ENCODE measurements at regions of chr12 and their contacts with region 1.

Region 1: GRCh38 chr12:7933255-7933729 is 2.7 kb downstream of the SLC2A3 start:
- DNase-seq: peak; percentile 66
- ATAC-seq: peak; percentile 92
- H3K4me3 Mint-ChIP-seq: no peak overlapping the region
- H3K27ac Mint-ChIP-seq: no peak overlapping the region
- H3K4me1 Mint-ChIP-seq: peaks cover 36% of the 10 kb centered on the region
- H3K27me3 Mint-ChIP-seq: no peaks in the 10 kb centered on the region
- CTCF ChIP-seq: peak; percentile 48; the same call in 1 of the 2 replicates

Region 2: GRCh38 chr12:7748852-7749251 is 184.4 kb before region 1 on chr12:
- CTCF ChIA-PET with region 1: no interaction called
- POLR2A ChIA-PET with region 1: no interaction called
- DNase-seq: no peak
- ATAC-seq: no peak
- H3K4me3 Mint-ChIP-seq: no peak overlapping the region
- H3K27ac Mint-ChIP-seq: peak overlapping the region; percentile 84; the same call in 1 of the 2 replicates
- H3K4me1 Mint-ChIP-seq: peaks cover 14% of the 10 kb centered on the region
- H3K27me3 Mint-ChIP-seq: no peaks in the 10 kb centered on the region
- CTCF ChIP-seq: no peak

Region 3: DNA sequence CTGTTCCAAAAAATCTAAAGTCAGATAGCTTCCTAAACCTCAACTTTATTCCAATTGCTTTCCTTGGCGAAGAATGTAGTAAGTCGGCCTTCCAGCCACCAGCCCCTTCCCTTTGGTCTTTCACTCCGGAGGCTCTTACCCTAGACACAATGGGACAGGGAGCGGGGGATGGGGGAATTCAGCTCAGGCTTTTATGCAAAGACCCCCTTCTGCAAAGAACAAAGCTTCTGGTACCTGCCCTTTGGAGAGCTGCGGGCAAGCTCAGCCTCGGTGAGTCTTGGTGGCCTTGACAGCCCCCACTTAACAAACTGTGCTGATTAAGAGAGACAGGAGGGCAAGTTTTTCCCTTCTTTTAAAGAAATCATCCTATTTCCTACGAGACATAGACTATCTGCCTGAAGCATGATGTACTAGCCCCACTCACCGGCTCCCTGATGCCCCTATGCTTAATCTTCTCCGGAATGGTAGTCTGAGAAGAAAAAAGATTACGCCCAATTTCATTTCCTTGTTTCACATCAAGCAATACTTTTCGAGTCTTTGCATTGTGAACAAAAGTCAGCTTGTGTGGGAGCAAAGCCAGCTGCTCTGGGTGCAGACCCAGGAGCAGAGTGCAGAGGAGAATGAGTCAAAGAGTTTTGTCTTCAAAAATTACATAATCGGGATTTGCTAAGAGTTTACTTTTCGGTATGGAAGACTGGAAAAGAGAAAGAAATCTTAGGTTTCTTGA is 145.6 kb before region 1 on chr12:
- CTCF ChIA-PET with region 1: no interaction called
- POLR2A ChIA-PET with region 1: no interaction called
- DNase-seq: peak; percentile 72
- ATAC-seq: peak; percentile 87
- H3K4me3 Mint-ChIP-seq: peak overlapping the region; percentile 91
- H3K27ac Mint-ChIP-seq: peak overlapping the region; percentile 98
- H3K4me1 Mint-ChIP-seq: peaks cover 61% of the 10 kb centered on the region
- H3K27me3 Mint-ChIP-seq: no peaks in the 10 kb centered on the region
- CTCF ChIP-seq: no peak

Region 4: DNA sequence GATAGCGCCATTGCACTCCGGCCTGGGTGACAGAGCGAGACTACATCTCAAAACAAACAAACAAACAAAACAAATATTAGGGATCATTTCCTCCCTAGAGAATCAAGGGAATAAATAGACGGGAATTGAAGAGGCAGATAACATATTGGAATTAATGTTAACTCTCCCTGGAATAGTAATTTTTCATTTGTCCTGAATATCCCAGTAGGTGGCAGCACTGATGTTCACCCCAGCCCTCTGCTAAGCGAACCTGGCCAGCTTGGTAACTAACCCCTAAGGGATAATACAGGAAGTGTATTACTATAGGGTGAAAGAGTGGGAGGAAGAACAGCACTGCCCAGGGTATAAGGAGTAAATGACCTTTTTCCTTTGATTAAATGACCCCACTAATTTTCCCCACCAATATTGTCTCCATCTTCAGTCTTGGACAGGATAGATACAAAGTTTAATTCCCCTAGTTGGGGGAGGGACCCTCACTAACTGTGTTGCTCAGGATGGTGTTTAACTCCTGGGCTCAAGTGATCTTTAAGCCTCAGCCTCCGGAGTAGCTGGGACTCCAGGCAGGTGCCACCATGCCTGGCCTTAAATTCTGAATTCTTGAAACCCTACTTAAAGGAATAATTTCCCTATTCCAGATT is 101.1 kb before region 1 on chr12:
- CTCF ChIA-PET with region 1: interaction called, 12 read pairs
- POLR2A ChIA-PET with region 1: interaction called, 3 read pairs
- DNase-seq: peak; percentile 34
- ATAC-seq: peak; percentile 98
- H3K4me3 Mint-ChIP-seq: no peak overlapping the region
- H3K27ac Mint-ChIP-seq: peak overlapping the region; percentile 72
- H3K4me1 Mint-ChIP-seq: peaks cover 30% of the 10 kb centered on the region
- H3K27me3 Mint-ChIP-seq: no peaks in the 10 kb centered on the region
- CTCF ChIP-seq: no peak; the same call in 1 of the 2 replicates

Region 5: GRCh38 chr12:7907009-7907408 is 26.3 kb before region 1 on chr12:
- CTCF ChIA-PET with region 1: interaction called, 13 read pairs
- POLR2A ChIA-PET with region 1: interaction called, 13 read pairs
- DNase-seq: peak; percentile 72
- ATAC-seq: peak; percentile 31
- H3K4me3 Mint-ChIP-seq: peak overlapping the region; percentile 30
- H3K27ac Mint-ChIP-seq: peak overlapping the region; percentile 100
- H3K4me1 Mint-ChIP-seq: peaks cover 47% of the 10 kb centered on the region
- H3K27me3 Mint-ChIP-seq: no peaks in the 10 kb centered on the region
- CTCF ChIP-seq: no peak

Region 6: GRCh38 chr12:7959701-7960121 is 26.4 kb after region 1 on chr12:
- CTCF ChIA-PET with region 1: interaction called, 205 read pairs
- POLR2A ChIA-PET with region 1: interaction called, 89 read pairs
- DNase-seq: peak; percentile 70
- ATAC-seq: peak; percentile 86
- H3K4me3 Mint-ChIP-seq: peak overlapping the region; percentile 75
- H3K27ac Mint-ChIP-seq: peak overlapping the region; percentile 97
- H3K4me1 Mint-ChIP-seq: peaks cover 48% of the 10 kb centered on the region
- H3K27me3 Mint-ChIP-seq: no peaks in the 10 kb centered on the region
- CTCF ChIP-seq: no peak

Region 7: DNA sequence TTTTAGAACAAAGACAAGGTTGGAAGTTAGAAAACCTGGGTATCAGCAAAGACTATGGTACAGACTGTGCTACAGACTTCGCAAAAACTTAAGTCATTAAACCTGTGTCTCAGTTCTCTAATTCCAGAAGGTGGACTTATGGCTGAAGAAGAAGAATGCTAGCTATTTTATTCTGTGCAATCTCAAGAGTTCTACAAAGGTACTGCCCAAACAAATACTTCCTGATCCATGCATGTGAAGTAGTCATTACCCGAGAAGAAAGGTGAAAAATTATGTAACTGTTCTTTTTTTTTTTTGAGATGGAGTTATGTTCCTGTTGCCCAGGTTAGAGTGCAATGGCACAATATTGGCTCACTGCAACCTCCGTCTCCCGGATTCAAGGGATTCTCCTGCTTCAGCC is 48.2 kb after region 1 on chr12:
- CTCF ChIA-PET with region 1: interaction called, 11 read pairs
- POLR2A ChIA-PET with region 1: interaction called, 3 read pairs
- DNase-seq: no peak
- ATAC-seq: no peak
- H3K4me3 Mint-ChIP-seq: no peak overlapping the region
- H3K27ac Mint-ChIP-seq: peak overlapping the region; percentile 74; the same call in 1 of the 2 replicates
- H3K4me1 Mint-ChIP-seq: peaks cover 35% of the 10 kb centered on the region
- H3K27me3 Mint-ChIP-seq: no peaks in the 10 kb centered on the region
- CTCF ChIP-seq: no peak

Region 8: GRCh38 chr12:8065991-8066594 is 132.8 kb after region 1 on chr12 and contains the start of gene C3AR1:
- CTCF ChIA-PET with region 1: no interaction called
- POLR2A ChIA-PET with region 1: no interaction called
- DNase-seq: no peak
- ATAC-seq: no peak
- H3K4me3 Mint-ChIP-seq: no peak within 1 kb of the TSS
- H3K27ac Mint-ChIP-seq: no peak within 1 kb of the TSS
- H3K4me1 Mint-ChIP-seq: no peaks in the 10 kb centered on the region
- H3K27me3 Mint-ChIP-seq: no peaks in the 10 kb centered on the region
- CTCF ChIP-seq: no peak
- total RNA-seq, gene C3AR1: 0.09 TPM in 2 of 3 replicates, not detected in the other

Region 9: DNA sequence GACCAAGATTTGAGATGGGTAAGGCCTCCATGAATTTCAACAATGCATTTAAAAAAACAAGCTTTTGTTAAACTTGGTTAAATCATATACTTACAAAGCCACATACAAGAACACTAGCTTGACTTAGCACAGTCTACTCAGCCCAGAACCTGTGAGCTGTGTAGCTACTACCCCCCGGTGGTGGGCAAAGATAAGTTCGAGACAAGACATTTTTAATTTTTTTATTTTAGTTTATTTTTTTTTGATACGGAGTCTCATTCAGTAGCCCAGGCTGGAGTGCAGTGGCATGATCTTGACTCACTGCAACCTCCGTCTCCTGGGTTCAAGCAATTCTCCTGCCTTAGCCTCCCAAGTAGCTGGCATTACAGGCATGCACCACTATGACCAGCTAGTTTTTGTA is 145.1 kb after region 1 on chr12:
- CTCF ChIA-PET with region 1: interaction called, 24 read pairs
- POLR2A ChIA-PET with region 1: interaction called, 3 read pairs
- DNase-seq: peak; percentile 36
- ATAC-seq: 0 out of 2 replicates have a peak, but pooled peaks have one; percentile 12
- H3K4me3 Mint-ChIP-seq: no peak overlapping the region
- H3K27ac Mint-ChIP-seq: no peak overlapping the region
- H3K4me1 Mint-ChIP-seq: peaks cover 40% of the 10 kb centered on the region
- H3K27me3 Mint-ChIP-seq: no peaks in the 10 kb centered on the region; the same call in 1 of the 2 replicates
- CTCF ChIP-seq: peak; percentile 37; the same call in 1 of the 2 replicates

Measured in WTC11 (cell line).